Heart left ventricle (tissue), 16 donors: ENCODE measurements at regions of chrX and their contacts with region 1.

Region 1: DNA sequence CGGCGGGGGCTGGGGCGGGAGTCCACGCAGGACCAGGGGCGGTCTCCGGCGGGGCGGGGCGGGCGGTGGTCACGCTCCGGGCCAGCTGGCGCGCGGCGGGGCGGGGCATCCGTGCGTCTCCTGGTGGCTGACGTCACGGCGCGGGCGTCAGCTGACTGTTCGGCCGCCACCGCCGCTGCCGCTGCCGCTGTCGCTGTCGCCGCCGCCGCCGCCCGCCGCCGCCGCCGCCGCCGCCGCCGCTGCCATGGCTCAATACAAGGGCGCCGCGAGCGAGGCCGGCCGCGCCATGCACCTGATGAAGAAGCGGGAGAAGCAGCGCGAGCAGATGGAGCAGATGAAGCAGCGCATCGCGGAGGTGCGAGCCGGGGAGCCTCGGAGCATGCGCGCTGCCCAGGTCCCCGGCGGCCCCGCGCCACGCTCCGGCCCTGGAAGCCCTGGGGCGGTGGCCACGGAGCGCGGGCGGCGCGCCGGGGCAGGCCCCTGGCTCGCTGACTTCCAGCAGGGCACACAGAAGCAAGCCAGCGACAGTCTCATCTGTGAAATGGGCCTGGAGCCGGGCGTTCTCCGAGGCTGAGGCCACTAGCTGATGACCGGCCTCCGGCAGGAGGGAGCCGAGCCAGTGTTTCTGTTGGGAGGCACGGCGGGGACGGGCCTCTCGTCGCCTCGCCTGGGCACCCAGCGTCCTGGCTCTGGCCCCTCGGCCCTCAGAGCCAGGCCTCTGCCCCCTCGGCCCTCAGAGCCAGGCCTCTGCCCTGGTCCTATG is at the start of gene FAM50A:
- DNase-seq: peak; percentile 78 to 90 (median 88)
- ATAC-seq: peak; percentile 54 to 92 (median 86)
- H3K4me3 ChIP-seq: peak within 1 kb of the TSS; percentile 56 to 84 (median 68)
- H3K27ac ChIP-seq: peak within 1 kb of the TSS; percentile 53 to 91 (median 81)
- H3K4me1 ChIP-seq: peaks cover 0 to 16% (median 10%) of the 10 kb centered on the region in 12 donors
- H3K27me3 ChIP-seq: no peaks in the 10 kb centered on the region
- CTCF ChIP-seq: no peak
- POLR2A ChIP-seq: peak in 1 of 2 donors; percentile 6
- total RNA-seq, gene FAM50A: 27.7 to 65.1 (median 41.2) TPM

Region 2: GRCh38 chrX:154484255-154485154 is 40.3 kb after region 1 on chrX:
- intact Hi-C with region 1: loop called in 2 of 10 experiments (anchors 5 kb)
- DNase-seq: peak in 1 of 5 donors; percentile 42
- ATAC-seq: peak in 1 of 4 donors; percentile 32
- H3K4me3 ChIP-seq: no peak overlapping the region
- H3K27ac ChIP-seq: peak overlapping the region in 7 of 12 donors; percentile 9 to 96 (median 62)
- H3K4me1 ChIP-seq: peaks cover 0 to 34% (median 15%) of the 10 kb centered on the region in 12 donors
- H3K27me3 ChIP-seq: no peaks in the 10 kb centered on the region
- CTCF ChIP-seq: no peak
- POLR2A ChIP-seq: no peak

Region 3: DNA sequence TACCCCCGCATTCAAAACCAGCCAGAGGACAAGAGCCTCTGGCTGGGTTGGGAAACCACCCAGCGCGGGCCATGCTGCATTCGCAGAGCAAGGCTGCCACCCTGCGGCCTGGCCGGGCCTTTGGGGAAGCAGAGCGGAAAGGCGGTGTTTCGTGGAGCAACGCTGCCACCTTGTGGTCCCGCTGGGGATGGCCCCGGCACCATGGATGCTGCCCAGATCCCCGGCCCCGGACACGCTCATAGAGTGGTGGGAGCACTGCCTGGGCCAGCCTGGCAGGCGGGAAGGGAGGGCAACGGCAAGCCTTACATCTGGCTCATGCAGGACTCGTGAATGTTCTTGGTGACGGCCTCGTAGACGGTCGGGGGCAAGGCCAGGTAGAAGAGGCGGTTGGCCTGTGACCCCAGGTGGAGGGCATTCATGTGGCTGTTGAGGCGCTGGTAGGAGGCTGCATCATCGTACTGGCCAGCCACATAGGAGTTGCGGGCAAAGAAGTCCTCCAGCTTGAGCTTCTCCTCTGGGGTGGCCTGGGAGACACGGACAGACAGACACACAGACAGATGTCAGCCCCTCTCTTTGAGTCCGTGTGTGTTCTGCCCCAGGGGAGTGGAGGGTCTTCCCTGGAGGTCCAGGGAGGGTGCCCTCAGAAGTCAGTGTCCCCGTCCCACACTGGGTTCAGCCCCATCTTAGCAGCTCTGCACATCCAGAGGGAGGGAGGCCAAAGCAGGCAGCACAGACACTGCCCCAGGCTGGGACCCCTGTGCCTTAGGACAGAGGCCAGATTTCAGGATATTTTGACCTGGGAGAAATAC is 90.9 kb after region 1 on chrX:
- intact Hi-C with region 1: no loop called
- DNase-seq: peak; percentile 85 to 94 (median 90)
- ATAC-seq: peak; percentile 69 to 95 (median 90)
- H3K4me3 ChIP-seq: no peak overlapping the region
- H3K27ac ChIP-seq: peak overlapping the region in 7 of 12 donors; percentile 25 to 70 (median 53)
- H3K4me1 ChIP-seq: peaks cover 0 to 5% (median 4%) of the 10 kb centered on the region in 12 donors
- H3K27me3 ChIP-seq: no peaks in the 10 kb centered on the region
- CTCF ChIP-seq: peak; percentile 80 to 100 (median 96)
- POLR2A ChIP-seq: no peak

Region 4: DNA sequence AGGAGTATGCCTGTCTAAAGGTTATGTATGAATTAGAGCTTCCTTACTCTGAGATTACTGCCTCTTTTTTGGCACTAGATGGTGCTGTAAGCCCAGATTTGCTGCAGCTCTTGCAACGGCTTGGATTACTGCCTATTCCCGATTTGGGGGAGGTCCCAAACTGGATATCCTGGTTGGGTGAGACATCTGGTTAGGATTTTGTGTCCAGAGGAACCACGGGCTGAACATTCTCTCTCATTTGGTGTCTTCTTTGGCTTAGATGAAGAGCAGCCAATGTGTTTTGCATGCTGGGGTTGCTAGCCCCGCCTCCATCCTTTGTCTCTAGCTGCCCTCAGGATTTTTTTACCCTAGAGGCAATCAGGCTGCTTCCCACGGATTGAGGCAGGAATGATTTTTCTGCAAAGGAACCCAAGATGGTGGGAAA is 473.9 kb after region 1 on chrX:
- intact Hi-C with region 1: no loop called
- DNase-seq: peak in 4 of 5 donors; percentile 26 to 54 (median 38)
- ATAC-seq: peak in 3 of 4 donors; percentile 62 to 73 (median 69)
- H3K4me3 ChIP-seq: peak overlapping the region in 6 of 12 donors; percentile 10 to 35 (median 29)
- H3K27ac ChIP-seq: no peak overlapping the region
- H3K4me1 ChIP-seq: no peaks in the 10 kb centered on the region
- H3K27me3 ChIP-seq: no peaks in the 10 kb centered on the region
- CTCF ChIP-seq: peak; percentile 27 to 62 (median 50)
- POLR2A ChIP-seq: no peak